Panc1 (cell line): ENCODE measurements at regions of chr12 and their contacts with region 1.

Region 1: DNA sequence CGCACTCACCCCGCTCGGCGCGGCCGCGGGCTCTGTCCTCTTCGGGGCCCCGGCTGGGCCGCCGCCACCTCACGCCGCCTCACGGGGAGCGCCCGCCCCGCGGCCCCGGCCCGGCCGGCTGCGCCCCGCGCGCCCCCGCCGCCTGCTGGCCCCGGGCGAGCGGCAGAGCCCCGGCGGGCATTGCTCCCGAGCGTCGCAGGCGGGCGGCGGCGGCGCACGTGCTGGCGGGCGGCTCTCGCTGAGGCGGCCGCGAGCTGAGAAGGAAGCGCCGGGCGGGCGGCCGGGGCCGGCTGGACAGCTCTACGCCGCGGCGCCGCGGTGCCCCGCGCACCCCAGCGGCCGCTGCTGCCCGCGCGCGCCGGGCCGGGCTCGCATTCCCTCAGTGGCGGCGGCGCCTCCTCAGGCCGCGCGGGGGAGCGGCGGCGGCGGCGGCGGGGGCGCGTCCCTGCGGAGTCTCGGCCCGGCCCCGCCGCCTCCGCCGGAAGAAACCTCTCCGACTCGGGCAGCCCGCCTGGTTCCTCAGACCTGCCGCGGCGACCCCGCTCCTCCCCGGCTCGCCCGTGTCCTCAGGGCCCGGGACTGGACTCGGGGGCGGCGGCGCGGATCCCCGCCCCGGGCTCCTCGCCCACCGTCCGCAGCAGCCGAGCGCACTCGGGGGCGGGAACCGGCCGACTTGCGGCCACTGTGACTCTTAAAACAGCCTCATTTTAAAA is at the start of gene PITPNM2:
- DNase-seq: no peak
- ATAC-seq: peak; percentile 87
- H3K4me3 ChIP-seq: peak within 1 kb of the TSS; percentile 64 to 67
- H3K27ac ChIP-seq: peak within 1 kb of the TSS; percentile 76
- H3K4me1 ChIP-seq: peaks cover 32% of the 10 kb centered on the region
- H3K27me3 ChIP-seq: no peaks in the 10 kb centered on the region
- CTCF ChIP-seq: peak; percentile 69; the same call in 1 of the 2 replicates
- total RNA-seq, gene PITPNM2: 26.4 TPM

Region 2: GRCh38 chr12:123021688-123022604 is 129.0 kb before region 1 on chr12:
- CTCF ChIA-PET with region 1: no interaction called
- POLR2A ChIA-PET with region 1: interaction called, 16 read pairs
- in situ Hi-C with region 1: no loop called
- intact Hi-C with region 1: no loop called
- DNase-seq: no peak
- ATAC-seq: no peak
- H3K4me3 ChIP-seq: no peak overlapping the region
- H3K27ac ChIP-seq: no peak overlapping the region
- H3K4me1 ChIP-seq: peaks cover 10% of the 10 kb centered on the region
- H3K27me3 ChIP-seq: no peaks in the 10 kb centered on the region
- CTCF ChIP-seq: no peak

Region 3: DNA sequence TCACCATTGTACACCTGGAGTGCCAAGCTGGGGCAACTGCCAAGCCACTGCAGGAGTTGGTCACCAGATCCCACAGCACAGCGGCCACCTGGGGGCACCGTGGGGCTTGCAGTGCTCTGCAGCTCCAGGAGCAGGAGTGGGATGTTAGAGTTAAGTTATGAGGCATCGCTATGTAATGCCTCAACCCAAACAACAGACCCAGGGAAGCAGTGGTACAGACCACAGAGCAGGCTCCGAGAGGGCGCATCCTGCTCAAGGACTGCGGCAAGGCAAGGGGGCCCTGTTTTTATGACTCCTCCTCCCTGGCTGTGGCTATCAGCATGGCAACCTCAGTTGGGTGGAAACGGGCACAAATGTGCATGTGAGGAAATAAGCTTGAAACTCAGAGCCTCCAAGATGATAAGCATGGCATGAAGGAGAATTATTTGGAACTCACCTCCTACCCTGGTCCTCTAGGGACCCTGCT is 107.3 kb before region 1 on chr12:
- CTCF ChIA-PET with region 1: interaction called, 4 read pairs
- POLR2A ChIA-PET with region 1: no interaction called
- in situ Hi-C with region 1: no loop called
- intact Hi-C with region 1: loop called (anchors 5 kb)
- DNase-seq: peak; percentile 51
- ATAC-seq: peak; percentile 94
- H3K4me3 ChIP-seq: no peak overlapping the region
- H3K27ac ChIP-seq: peak overlapping the region; percentile 65
- H3K4me1 ChIP-seq: peaks cover 10% of the 10 kb centered on the region
- H3K27me3 ChIP-seq: no peaks in the 10 kb centered on the region
- CTCF ChIP-seq: peak; percentile 87